OCI-LY7 (cell line): ENCODE measurements at regions of chr12 and their contacts with region 1.

Region 1: DNA sequence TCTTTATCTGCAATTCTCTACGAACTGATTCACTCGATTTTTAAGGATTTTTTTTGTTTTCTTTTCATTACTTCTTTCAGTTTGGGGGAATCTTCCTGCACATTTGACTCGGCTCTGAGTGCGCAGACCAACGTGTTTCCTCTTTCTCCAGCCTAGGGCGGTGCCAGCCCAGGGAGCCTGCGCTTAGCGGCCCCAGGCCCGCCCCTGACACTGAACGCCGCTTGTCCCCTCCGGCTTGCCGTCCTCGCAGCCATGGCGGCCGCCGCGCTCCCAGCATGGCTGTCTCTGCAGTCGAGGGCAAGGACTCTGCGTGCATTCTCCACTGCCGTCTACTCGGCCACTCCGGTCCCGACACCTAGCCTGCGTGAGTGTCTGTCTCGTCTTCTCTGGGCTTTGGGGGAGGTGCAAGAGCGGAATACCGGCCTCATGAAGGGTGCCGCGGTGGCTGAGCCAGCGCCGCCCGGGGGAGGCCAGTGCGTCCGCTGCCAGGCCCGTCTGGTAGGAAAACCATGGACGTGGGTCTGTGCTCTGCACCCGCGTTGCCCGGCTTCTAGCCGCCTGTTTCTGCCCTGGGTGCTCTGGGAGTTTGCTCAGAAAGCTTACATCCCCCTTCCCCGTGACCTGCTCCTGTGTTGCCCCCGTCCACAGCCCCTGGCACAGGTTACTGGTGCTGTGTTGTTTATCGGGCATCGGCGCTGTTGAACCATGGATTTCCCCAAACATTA is at the start of gene MRPS35:
- DNase-seq: peak; percentile 91
- H3K4me3 ChIP-seq: peak within 1 kb of the TSS; percentile 86
- H3K27ac ChIP-seq: peak within 1 kb of the TSS; percentile 41
- H3K4me1 ChIP-seq: peaks cover 15% of the 10 kb centered on the region
- CTCF ChIP-seq: no peak
- total RNA-seq, gene MRPS35: 32.6 and 33.9 TPM in 2 replicates

Region 2: DNA sequence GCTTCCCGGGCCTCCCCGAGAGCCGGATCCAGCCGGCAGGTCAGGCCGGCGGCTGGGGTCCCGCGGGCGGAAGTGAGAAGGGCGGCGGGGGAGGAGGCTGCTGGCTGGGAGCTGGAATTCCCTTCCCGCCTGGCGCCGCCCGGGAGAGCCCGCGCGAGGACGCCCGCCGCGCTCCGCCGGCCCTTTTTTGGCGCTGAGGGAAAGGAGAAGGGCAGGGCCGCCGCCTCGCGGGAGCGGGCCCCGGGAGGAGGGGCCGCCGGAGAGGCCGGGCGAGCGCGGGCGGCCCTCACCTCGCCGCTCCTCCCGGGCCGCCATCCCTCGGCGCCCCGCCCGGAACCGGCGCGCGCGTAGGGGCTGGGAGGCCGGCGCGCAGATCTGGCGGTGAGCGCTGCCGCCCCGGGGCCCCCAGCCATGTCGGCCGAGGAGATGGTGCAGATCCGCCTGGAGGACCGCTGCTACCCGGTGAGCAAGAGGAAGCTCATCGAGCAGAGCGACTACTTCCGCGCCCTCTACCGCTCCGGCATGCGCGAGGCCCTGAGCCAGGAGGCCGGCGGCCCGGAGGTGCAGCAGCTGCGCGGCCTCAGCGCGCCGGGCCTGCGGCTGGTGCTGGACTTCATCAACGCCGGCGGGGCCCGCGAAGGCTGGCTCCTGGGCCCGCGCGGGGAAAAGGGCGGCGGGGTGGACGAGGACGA is 69.3 kb after region 1 on chr12 and contains the starts of genes KLHL42 and MANSC4:
- CTCF ChIA-PET with region 1: no interaction called
- POLR2A ChIA-PET with region 1: no interaction called
- intact Hi-C with region 1: loop called (anchors 2 kb)
- DNase-seq: peak; percentile 85
- H3K4me3 ChIP-seq: peak within 1 kb of the TSS; percentile 77
- H3K27ac ChIP-seq: peak within 1 kb of the TSS; percentile 58
- H3K4me1 ChIP-seq: peaks cover 24% of the 10 kb centered on the region
- CTCF ChIP-seq: no peak
- total RNA-seq, gene KLHL42: 19.5 and 24.2 TPM in 2 replicates
- total RNA-seq, gene MANSC4: not detected in 2 replicates

Region 3: GRCh38 chr12:28164644-28165275 is 454.0 kb after region 1 on chr12:
- CTCF ChIA-PET with region 1: no interaction called
- POLR2A ChIA-PET with region 1: no interaction called
- intact Hi-C with region 1: no loop called
- DNase-seq: no peak
- H3K4me3 ChIP-seq: no peak overlapping the region
- H3K27ac ChIP-seq: no peak overlapping the region
- H3K4me1 ChIP-seq: no peaks in the 10 kb centered on the region
- CTCF ChIP-seq: no peak

Region 4: GRCh38 chr12:28190321-28191050 is 479.7 kb after region 1 on chr12 and contains the start of gene CCDC91:
- CTCF ChIA-PET with region 1: no interaction called
- POLR2A ChIA-PET with region 1: no interaction called
- intact Hi-C with region 1: loop called (anchors 10 kb)
- DNase-seq: peak; percentile 87
- H3K4me3 ChIP-seq: peak within 1 kb of the TSS; percentile 83
- H3K27ac ChIP-seq: peak within 1 kb of the TSS; percentile 49
- H3K4me1 ChIP-seq: peaks cover 15% of the 10 kb centered on the region
- CTCF ChIP-seq: 0 out of 2 replicates have a peak, but pooled peaks have one; percentile 19
- total RNA-seq, gene CCDC91: 15.8 and 17.7 TPM in 2 replicates